ENCODE measurements at regions of chr7 and their contacts with region 1.

Region 1: GRCh38 chr7:101792051-101792681 is 25.3 kb upstream of the CUX1 start:
- DNase-seq: no peak
- ATAC-seq: no peak
- H3K4me3 Mint-ChIP-seq: no peak overlapping the region
- H3K27ac Mint-ChIP-seq: no peak overlapping the region
- H3K4me1 Mint-ChIP-seq: no peaks in the 10 kb centered on the region
- H3K27me3 Mint-ChIP-seq: no peaks in the 10 kb centered on the region

Region 2: DNA sequence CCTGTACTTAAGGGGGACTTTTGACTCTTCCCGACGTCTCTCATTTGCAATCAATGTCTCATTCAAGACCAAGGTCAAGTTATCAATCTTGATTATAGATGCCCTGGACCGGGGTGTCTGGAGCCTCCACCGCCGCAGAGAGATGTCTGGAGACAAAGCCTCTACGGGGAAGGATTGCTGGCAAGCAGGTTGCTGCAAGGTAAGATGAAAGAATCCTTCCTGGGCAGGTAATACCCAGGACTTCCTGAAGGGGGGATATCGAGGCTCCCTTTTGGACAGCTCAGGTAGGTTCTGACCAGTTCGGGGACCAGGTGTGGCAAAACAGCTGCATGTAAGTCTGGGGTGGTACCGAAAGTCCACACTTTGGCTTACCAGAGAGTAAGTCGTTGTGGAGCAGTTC is 12.8 kb after region 1 on chr7:
- CTCF ChIA-PET with region 1: interaction called, 5 read pairs
- POLR2A ChIA-PET with region 1: no interaction called
- intact Hi-C with region 1: loop called in 1 of 2 experiments (anchors 1 kb)
- DNase-seq: peak; percentile 30
- ATAC-seq: peak; percentile 64
- H3K4me3 Mint-ChIP-seq: no peak overlapping the region
- H3K27ac Mint-ChIP-seq: no peak overlapping the region
- H3K4me1 Mint-ChIP-seq: peaks cover 17% of the 10 kb centered on the region
- H3K27me3 Mint-ChIP-seq: peaks cover 11% of the 10 kb centered on the region

Measured in activated CD4-positive, alpha-beta T cell treated with anti-CD3 and anti-CD28 coated beads for 36 hours (primary cell).